Ovary (tissue), 10 donors: ENCODE measurements at regions of chr3 and their contacts with region 1.

Region 1: DNA sequence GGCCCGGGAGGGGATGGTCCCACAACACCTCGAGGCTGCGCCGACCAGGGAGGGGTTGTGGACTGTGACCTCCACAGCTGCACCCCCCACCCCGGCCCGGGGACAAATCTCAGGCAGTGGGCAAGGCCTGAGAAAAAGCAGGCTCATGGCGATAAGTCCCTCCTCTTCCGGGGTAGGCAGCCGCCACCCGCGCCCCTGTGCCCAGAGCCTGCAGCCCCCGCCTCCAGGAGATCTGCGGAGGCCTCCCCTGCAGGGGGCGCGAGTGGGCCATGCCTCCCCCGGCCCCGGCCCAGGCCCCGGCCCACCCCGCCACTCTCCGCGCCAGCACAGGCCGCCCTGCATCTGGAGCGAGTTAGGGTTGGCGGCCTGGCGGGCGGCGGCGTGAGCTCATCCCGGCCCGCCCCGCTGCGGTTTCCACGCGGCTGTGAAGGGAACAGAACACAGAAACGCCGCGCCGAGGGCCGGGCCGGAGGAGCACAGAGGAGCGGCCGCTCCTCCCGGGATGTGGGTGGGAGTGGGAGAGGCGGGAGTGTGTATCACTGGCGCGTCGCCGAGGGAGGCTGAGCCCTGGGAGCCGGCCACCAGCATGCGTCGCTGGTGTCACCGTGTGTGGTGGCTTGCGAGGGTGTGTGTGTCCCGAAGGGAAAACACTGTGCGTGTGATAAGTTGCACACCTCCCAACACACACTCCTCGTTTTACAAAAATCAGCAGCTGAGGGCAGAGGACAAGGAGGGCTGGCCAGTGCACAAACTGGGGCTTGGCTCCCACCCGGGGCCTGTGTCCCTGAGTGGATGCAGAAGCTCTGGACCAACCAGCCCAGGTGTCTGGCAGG is 17.2 kb downstream of the MYL3 start:
- DNase-seq: peak; percentile 77 to 87 (median 86)
- H3K4me3 ChIP-seq: peak overlapping the region; percentile 52
- H3K27ac ChIP-seq: peak overlapping the region in 1 of 2 donors; percentile 57
- H3K4me1 ChIP-seq: peaks cover 12% of the 10 kb centered on the region
- H3K27me3 ChIP-seq: no peaks in the 10 kb centered on the region
- CTCF ChIP-seq: peak; percentile 51 to 75 (median 61)
- EP300 ChIP-seq: no peak
- POLR2A ChIP-seq: peak; percentile 18

Region 2: GRCh38 chr3:46895204-46895660 is 49.2 kb after region 1 on chr3:
- intact Hi-C with region 1: loop called in 2 of 4 experiments (anchors 5 kb)
- DNase-seq: peak; percentile 76 to 89 (median 85)
- H3K4me3 ChIP-seq: no peak overlapping the region
- H3K27ac ChIP-seq: no peak overlapping the region
- H3K4me1 ChIP-seq: peaks cover 7% of the 10 kb centered on the region
- H3K27me3 ChIP-seq: no peaks in the 10 kb centered on the region
- CTCF ChIP-seq: peak; percentile 74 to 94 (median 92)
- EP300 ChIP-seq: no peak
- POLR2A ChIP-seq: no peak